ENCODE measurements at regions of chrX and their contacts with region 1.

Region 1: GRCh38 chrX:130110379-130111219 is at the start of gene ELF4:
- DNase-seq: peak; percentile 64
- H3K4me3 ChIP-seq: peak within 1 kb of the TSS; percentile 85
- H3K27ac ChIP-seq: peak within 1 kb of the TSS; percentile 74
- H3K4me1 ChIP-seq: peaks cover 19% of the 10 kb centered on the region
- CTCF ChIP-seq: no peak
- total RNA-seq, gene ELF4: 13.4 and 15.0 TPM in 2 replicates

Region 2: DNA sequence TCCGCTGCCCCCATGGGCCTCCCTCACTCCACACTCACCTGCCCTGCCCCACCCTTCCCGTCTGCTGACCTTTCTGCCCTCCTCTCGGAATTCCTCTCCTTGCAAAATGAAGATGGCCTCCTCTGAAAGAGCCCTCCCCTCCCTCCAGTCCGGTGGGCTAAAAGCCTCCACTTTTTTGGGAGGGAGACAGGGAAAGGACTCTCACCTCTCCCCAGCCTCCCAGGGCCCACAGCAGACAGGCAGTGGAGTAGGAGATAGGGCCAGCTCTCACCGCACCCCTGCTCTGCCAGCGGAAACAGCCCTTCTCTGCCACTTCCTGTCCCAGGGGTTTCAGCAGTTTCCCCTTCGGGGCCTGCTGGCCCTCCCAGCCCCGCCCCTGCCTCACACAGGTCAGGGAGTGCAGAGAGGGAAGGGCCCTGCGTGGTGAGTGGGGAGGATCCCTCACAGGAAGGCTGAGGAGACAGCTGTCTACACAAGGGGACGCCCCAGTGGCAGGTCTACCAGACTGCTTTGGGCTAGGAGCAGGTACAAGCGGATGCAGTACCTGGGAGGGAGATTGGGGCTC is 18.6 kb before region 1 on chrX:
- CTCF ChIA-PET with region 1: interaction called, 5 read pairs
- POLR2A ChIA-PET with region 1: interaction called, 7 read pairs
- intact Hi-C with region 1: loop called (anchors 1 kb)
- DNase-seq: peak; percentile 88
- H3K4me3 ChIP-seq: peak overlapping the region; percentile 62
- H3K27ac ChIP-seq: peak overlapping the region; percentile 79
- H3K4me1 ChIP-seq: peaks cover 58% of the 10 kb centered on the region
- CTCF ChIP-seq: peak; percentile 54

Region 3: GRCh38 chrX:130165703-130166502 is 55.3 kb after region 1 on chrX and contains the start of gene AIFM1:
- CTCF ChIA-PET with region 1: no interaction called
- POLR2A ChIA-PET with region 1: no interaction called
- intact Hi-C with region 1: loop called (anchors 1 kb)
- DNase-seq: peak; percentile 94
- H3K4me3 ChIP-seq: peak within 1 kb of the TSS; percentile 77
- H3K27ac ChIP-seq: peak within 1 kb of the TSS; percentile 87
- H3K4me1 ChIP-seq: peaks cover 28% of the 10 kb centered on the region
- CTCF ChIP-seq: no peak
- total RNA-seq, gene AIFM1: 23.1 and 28.8 TPM in 2 replicates

Region 4: GRCh38 chrX:131861088-131861787 is 1750.6 kb after region 1 on chrX:
- CTCF ChIA-PET with region 1: no interaction called
- POLR2A ChIA-PET with region 1: no interaction called
- intact Hi-C with region 1: no loop called
- DNase-seq: no peak
- H3K4me3 ChIP-seq: no peak overlapping the region
- H3K27ac ChIP-seq: no peak overlapping the region
- H3K4me1 ChIP-seq: no peaks in the 10 kb centered on the region
- CTCF ChIP-seq: no peak